Head of caudate nucleus (tissue), 42 donors: ENCODE measurements at regions of chr11 and their contacts with region 1.

Region 1: DNA sequence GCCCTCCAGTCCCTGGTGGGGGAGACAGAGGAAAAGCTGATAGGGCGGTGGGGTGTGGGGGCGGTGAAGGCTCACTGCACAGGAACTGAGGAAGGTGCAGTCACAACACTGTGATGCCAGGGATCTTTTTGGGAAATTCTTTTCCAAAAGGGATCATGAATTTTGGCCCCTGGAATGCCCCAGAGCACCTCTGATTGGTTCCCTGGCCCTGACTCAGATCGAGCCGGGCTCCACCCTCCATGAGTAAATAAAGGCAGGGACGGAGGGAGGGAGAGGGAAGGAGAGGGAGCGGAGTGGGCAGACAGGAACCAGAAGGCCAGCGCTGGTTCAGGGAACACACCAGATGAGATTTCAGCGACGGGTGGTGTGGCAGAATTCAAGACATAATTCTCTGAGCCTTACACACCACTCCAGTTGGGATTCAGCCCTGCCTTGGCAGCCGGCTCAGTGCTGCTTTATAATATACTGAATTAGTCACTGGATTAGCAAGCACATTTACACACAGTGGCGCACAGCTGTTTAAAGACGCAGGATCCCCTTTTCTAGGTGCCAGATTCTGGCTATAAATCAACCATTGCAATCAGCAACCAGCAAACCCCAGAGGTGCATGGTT is 80.3 kb downstream of the ETS1 start:
- DNase-seq: peak in 15 of 42 donors; percentile 21 to 73 (median 39)

Region 2: GRCh38 chr11:128472128-128473089 is 34.7 kb before region 1 on chr11:
- intact Hi-C with region 1: no loop called
- DNase-seq: no peak

Region 3: DNA sequence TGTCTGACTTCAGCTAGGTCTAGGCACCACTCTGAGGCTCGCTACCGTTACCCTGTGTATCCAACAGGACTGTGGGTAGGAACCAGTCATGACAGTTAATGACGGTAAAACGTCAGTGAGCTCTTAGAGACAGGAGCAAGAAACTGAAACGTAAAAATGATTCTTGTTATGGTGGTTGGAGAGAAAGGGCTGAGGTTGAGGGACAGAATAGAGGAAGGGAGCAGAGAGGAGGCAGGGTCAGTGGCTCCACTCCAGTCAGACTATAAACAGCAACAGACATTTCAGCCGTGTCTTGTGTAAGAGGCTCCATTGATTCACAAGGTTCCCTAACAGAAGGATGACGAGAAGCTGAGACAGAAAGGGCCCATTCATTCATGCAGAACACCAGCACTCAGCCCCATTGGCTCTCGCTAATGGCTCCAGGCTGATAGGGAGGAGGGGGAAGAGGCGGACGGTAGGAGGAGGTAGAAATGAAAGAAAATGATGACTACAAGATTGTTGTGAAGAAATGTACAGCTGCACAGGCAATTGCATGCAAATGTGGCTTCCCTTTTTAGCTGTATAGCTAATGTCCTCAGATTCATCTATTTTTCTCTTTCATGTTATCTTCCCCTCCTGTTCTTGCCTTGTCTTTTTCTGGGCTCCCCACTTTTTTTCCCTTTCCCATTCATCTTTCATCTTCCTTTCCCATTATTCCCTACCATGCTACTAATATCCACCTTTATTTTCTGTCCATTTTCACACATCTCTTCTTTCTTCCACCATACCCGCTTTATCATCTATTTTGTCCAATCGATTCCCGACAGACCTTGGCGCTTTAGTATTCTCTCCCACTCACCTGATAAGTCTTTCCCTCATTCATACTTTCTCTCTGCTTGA is 45.9 kb after region 1 on chr11:
- intact Hi-C with region 1: loop called (anchors 10 kb)
- DNase-seq: peak; percentile 16 to 92 (median 74)

Region 4: GRCh38 chr11:128720522-128720985 is 213.4 kb after region 1 on chr11:
- intact Hi-C with region 1: no loop called
- DNase-seq: no peak

Region 5: DNA sequence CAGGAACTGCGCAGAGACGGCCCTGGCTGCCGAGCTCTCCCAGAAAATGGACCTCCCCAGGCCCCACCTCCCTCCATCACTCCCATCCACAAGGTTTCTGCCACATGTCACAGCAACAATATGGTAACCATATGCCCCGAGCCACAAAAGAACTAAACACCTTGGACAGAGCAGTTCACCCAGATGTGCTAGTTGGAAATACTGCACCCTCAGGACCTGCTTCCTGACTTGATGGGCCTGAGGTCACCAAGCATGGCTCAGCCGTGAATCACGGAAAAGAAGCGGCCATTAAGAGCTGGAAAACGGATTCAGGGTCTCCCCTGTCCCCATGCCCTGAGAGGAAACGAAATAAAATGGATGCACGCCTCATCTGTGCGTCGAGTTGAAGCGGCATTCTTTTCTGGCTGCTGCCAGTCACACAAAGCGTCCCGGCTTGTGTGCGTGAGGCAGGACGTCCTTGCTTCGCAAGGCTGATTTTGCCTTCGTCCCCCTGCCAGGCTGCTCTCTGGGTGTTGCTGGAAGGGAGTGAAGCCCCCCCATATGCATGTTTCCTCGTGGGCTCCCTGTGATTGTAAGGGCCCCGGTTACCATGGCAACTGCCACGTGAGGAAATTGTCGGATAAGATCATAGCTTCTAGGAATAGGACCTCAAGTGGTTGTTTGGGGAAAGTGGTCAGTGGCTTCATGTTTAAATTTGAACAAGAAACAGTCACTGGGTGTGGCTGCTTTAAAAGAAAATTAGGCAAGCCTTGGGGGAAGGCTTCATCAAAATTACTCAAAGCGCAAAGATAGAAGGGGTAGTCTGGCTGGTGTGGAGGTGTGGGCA is 238.4 kb after region 1 on chr11:
- intact Hi-C with region 1: no loop called
- DNase-seq: no peak